K562 (cell line): ENCODE measurements at regions of chr11 and their contacts with region 1.

Region 1: GRCh38 chr11:73141848-73142286 is 251 bp downstream of the FCHSD2 start:
- DNase-seq: peak in 1 of 4 experiments; percentile 75
- ATAC-seq: peak; percentile 33
- H3K4me3 ChIP-seq: peak overlapping the region; percentile 92
- H3K27ac ChIP-seq: peak overlapping the region; percentile 97
- H3K4me1 ChIP-seq: peaks cover 26 to 36% of the 10 kb centered on the region in 2 experiments
- H3K27me3 ChIP-seq: no peaks in the 10 kb centered on the region
- CTCF ChIP-seq: no peak
- EP300 ChIP-seq: no peak
- POLR2A ChIP-seq: no peak
- RAD21 ChIP-seq: no peak

Region 2: GRCh38 chr11:73152861-73153483 is 11.1 kb after region 1 on chr11:
- CTCF ChIA-PET with region 1: no interaction called
- POLR2A ChIA-PET with region 1: interaction called, 14 read pairs
- in situ Hi-C with region 1: no loop called
- intact Hi-C with region 1: no loop called
- DNase-seq: no peak
- ATAC-seq: no peak
- H3K4me3 ChIP-seq: no peak overlapping the region
- H3K27ac ChIP-seq: no peak overlapping the region
- H3K4me1 ChIP-seq: peaks cover 5 to 6% of the 10 kb centered on the region in 2 experiments; a peak in 2 of 5 replicates
- H3K27me3 ChIP-seq: no peaks in the 10 kb centered on the region
- CTCF ChIP-seq: no peak
- EP300 ChIP-seq: no peak
- POLR2A ChIP-seq: no peak
- RAD21 ChIP-seq: no peak

Region 3: DNA sequence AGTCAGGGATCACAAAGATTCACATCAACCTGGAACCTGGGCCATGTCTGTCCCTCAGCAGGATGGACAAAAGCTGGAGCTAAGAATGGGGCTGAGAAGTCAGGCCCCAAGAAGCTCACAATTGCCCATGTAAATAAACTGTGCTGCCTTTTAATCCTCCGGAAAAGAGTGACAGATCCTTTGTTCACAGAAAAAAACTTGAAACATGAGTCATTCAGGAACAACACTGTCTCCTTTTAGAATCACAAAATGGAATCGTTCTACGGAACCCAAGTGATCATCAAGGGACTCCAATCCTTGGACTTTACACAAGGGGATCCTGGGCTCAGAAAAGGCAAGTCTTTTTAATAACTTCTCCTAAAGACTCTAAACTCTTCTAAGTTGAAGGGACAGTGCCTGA is 270.4 kb after region 1 on chr11:
- CTCF ChIA-PET with region 1: no interaction called
- POLR2A ChIA-PET with region 1: no interaction called
- in situ Hi-C with region 1: no loop called
- intact Hi-C with region 1: no loop called
- DNase-seq: no peak
- ATAC-seq: no peak
- H3K4me3 ChIP-seq: no peak overlapping the region
- H3K27ac ChIP-seq: no peak overlapping the region
- H3K4me1 ChIP-seq: no peaks in the 10 kb centered on the region
- H3K27me3 ChIP-seq: no peaks in the 10 kb centered on the region
- CTCF ChIP-seq: no peak
- EP300 ChIP-seq: no peak
- POLR2A ChIP-seq: no peak
- RAD21 ChIP-seq: no peak